ENCODE measurements at regions of chr1 and their contacts with region 1.

Region 1: GRCh38 chr1:233790662-233791375 is 113.7 kb upstream of the SLC35F3 start:
- DNase-seq: peak in 5 of 10 donors; percentile 29 to 80 (median 50)

Region 2: GRCh38 chr1:233440951-233441401 is 349.8 kb before region 1 on chr1:
- intact Hi-C with region 1: loop called (anchors 1 kb)
- DNase-seq: peak in 1 of 10 donors; percentile 15

Region 3: DNA sequence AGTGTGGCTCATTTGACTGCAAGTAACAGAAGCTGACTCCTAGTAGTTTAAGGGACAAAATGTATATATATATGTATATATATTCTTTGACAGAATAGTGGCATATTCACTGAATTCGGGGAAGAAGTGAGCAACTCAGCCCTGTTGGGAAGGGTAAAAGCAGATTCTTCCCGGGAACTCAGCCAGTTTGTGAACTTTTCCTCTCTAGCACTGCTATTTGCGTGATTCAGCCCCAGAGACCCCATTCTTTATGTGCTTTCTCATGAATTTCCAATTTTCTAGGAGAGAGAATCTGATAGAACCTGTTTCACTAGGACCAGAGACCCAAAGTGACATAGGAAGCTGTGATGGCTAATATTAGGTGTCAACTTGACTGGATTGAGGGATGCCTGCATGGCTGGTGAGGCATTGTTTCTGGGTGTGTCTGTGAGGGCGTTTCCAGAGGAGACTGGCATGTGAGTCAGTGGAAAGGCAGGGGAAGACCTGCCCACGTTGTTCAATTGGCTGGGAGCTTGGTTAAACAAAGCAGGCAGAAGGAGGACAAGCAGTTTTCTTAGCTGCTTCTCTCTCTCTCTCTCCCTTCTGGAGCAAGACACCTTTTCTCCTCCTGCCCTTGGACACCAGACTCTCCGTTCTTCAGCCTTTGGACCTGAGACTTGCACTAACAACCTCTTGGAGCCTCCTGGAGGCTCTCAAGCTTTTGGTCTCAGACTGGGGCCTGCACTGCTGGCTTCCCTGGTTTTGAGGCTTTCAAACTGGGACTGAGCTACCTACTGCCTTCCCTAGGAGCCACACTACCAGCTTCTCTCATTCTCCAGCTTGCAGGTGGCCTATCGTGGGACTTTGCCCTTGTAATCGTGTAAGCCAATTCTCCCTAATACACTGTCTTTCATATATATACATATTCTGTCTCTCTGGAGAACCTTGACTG is 270.3 kb before region 1 on chr1:
- intact Hi-C with region 1: loop called (anchors 5 kb)
- DNase-seq: peak in 2 of 10 donors; percentile 75 to 81

Region 4: DNA sequence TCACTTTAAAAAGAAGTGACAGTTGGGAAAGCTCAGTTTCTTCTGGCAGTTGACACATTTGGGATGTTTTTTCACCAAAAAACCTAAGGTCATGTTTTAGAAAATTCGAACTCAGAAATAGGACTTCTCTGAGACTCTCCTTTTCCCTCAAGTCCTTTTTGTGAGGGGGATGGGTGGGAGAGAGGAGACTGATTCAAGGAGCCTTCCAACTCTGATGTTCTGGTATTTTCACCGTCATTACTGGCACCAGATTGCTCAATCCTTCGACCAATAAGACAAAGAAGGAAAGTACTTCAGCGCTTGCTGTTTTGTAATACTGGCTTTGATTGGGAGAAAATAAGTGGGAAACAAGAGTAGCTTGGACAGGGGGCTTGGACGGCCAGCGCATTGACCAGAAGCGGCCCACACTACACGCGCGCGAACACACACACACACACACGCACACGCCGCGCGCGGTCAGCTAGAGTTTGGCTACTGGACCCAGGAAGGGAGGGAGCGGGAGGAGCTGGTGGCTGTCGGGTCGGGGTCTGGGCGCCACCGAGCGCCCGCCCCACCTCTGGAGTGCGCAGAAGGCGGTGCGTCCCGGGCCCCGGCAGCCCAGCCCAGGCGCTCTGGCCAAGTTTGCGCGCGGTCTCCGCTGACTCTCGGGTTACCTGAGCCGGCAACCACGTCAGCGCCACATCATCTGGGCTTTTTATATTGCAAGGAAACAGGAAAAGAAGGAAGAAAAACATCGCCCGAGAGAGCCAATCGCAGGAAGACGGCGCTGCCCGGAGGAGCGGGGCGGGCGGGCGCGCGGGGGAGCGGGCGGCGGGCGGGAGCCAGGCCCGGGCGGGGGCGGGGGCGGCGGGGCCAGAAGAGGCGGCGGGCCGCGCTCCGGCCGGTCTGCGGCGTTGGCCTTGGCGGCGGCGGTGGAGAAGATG is 177.3 kb before region 1 on chr1 and contains the start of gene KCNK1:
- intact Hi-C with region 1: loop called (anchors 5 kb)
- DNase-seq: peak; percentile 23 to 92 (median 56)

Region 5: GRCh38 chr1:233689017-233689747 is 101.6 kb before region 1 on chr1:
- intact Hi-C with region 1: no loop called
- DNase-seq: no peak

Measured in posterior cingulate gyrus (tissue), 11 donors.